Activated CD4-positive, alpha-beta T cell treated with anti-CD3 and anti-CD28 coated beads, Interleukin-2, amount 10 ng/mL, durations not matched to agents 24 days and 14 days (primary cell): ENCODE measurements at regions of chr6 and their contacts with region 1.

Region 1: DNA sequence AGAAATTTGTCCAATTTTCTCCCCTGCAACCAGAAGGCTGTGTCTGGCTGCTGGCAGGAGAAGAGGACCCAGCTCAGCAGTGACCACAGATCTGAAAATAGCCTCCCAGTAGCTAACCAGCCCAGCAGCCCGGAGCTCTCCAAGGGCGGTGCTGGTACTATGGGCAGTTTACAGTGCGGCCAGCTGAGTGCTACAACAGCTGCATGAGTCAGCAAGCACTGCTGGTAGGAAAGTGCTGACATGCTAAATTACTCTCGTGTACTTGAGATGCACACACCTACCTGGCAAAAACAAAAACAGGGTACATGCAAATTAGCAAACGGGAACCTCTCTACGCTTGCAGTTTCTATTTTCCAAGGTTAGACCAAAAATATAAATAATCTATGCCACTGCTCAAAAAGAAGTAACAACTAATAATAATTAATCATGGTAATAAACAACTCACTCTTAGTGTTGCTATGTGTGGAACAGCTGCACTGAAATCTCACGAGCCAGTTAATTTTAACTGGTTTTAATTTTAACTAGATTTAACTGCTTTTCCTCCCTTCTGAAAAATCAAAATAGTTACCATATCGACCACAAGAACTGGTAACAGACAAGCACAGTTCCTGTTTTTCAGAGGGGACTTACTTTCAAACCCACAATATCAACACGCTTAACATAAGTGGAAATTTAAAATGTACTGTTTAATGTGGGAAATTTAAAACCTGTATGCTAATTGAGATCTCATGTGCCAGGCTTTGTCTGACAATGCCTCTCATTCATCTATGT is 10.8 kb downstream of the BACH2 start:
- DNase-seq: peak; percentile 87
- H3K4me3 Mint-ChIP-seq: peak overlapping the region; percentile 87
- H3K27ac Mint-ChIP-seq: peak overlapping the region; percentile 94
- H3K4me1 Mint-ChIP-seq: peaks cover 81% of the 10 kb centered on the region
- H3K27me3 Mint-ChIP-seq: no peaks in the 10 kb centered on the region

Region 2: GRCh38 chr6:90025523-90026061 is 260.2 kb before region 1 on chr6:
- intact Hi-C with region 1: loop called (anchors 1 kb)
- DNase-seq: peak; percentile 72
- H3K4me3 Mint-ChIP-seq: peak overlapping the region; percentile 56
- H3K27ac Mint-ChIP-seq: peak overlapping the region; percentile 90
- H3K4me1 Mint-ChIP-seq: peaks cover 66% of the 10 kb centered on the region
- H3K27me3 Mint-ChIP-seq: no peaks in the 10 kb centered on the region

Region 3: DNA sequence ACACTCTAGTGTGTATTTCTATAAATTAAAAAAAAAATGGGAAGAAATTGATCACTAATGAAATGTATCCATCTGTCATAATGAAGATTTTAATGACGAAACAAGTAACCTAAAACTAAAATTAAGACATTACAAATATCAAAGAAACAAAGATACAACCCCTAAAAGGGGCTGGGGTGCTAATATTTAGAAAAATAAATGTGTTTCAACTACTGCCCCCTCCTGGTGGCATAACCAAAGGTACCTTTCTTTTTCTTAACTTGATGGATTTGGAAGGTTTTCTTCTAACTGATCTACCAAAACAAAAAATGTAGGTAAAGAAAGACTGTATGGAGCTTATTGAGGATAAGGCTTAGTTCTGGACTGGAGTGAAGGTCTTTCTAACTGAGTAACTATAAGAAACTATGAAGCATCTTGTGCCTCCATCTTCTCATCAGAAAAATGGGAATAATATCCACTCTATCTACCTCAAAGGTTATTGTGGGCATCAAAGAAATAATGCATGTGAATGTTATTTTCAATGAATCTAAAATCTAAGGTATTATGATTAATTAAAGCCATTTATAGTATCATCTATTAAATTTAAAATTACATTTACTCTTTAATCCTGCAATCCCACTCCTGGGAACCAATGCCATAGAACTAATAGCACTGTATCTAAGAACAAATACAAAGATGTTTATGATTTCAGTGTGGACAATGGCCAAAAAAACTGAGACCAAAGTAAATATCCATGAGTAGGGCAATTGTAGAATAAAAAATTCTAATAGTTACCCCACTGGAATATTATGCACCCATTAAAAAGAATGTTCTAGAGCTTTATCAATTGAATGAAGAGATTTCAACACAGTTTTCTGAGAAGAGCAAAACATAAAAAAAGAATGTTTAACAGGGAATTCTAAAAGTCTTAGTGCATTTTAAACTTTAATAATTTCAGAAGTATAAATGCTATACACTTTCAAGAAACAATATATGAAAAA is 106.3 kb before region 1 on chr6:
- intact Hi-C with region 1: loop called (anchors 1 kb)
- DNase-seq: peak; percentile 75
- H3K4me3 Mint-ChIP-seq: peak overlapping the region; percentile 11
- H3K27ac Mint-ChIP-seq: no peak overlapping the region
- H3K4me1 Mint-ChIP-seq: peaks cover 68% of the 10 kb centered on the region
- H3K27me3 Mint-ChIP-seq: no peaks in the 10 kb centered on the region

Region 4: DNA sequence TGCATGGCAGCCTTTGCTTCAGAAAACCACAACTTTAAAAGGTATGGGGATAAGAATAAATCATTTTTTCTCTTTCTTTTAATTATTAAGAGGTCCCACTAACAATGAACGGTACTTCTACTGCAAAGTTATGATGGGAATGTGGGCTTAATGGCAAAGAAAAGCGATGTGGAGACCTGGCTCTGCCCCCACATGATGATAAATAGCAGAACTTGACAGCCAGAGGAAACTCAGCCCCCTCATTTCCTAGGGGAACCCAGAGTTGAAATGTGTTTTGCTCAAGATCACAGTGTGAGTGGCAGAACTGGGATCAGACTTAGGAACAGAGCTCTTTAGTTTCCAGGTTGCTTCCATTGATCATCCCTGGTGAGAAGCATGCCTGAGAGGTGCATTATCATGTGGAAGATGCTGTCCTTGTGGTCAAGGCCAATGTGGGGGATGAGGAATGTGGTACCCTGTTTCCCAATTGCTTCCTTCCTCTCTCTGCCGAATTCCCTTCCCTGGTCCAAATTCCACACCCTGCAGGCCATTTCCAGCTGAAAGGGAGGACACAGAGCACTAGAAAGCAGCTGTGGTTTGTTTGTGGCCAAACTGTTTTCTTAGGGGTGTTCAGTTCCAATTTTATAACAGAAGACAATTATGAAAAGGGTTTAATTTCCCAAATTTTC is 55.1 kb before region 1 on chr6:
- intact Hi-C with region 1: loop called (anchors 1 kb)
- DNase-seq: no peak
- H3K4me3 Mint-ChIP-seq: peak overlapping the region; percentile 56
- H3K27ac Mint-ChIP-seq: peak overlapping the region; percentile 30
- H3K4me1 Mint-ChIP-seq: peaks cover 78% of the 10 kb centered on the region
- H3K27me3 Mint-ChIP-seq: no peaks in the 10 kb centered on the region

Region 5: GRCh38 chr6:90296346-90297114 is 10.7 kb after region 1 on chr6 and contains the start of gene BACH2:
- intact Hi-C with region 1: loop called (anchors 1 kb)
- DNase-seq: peak; percentile 97
- H3K4me3 Mint-ChIP-seq: peak within 1 kb of the TSS; percentile 94
- H3K27ac Mint-ChIP-seq: peak within 1 kb of the TSS; percentile 95
- H3K4me1 Mint-ChIP-seq: peaks cover 40% of the 10 kb centered on the region
- H3K27me3 Mint-ChIP-seq: peaks cover 23% of the 10 kb centered on the region
- total RNA-seq, gene BACH2: 69.0 and 69.2 TPM in 2 replicates

Region 6: DNA sequence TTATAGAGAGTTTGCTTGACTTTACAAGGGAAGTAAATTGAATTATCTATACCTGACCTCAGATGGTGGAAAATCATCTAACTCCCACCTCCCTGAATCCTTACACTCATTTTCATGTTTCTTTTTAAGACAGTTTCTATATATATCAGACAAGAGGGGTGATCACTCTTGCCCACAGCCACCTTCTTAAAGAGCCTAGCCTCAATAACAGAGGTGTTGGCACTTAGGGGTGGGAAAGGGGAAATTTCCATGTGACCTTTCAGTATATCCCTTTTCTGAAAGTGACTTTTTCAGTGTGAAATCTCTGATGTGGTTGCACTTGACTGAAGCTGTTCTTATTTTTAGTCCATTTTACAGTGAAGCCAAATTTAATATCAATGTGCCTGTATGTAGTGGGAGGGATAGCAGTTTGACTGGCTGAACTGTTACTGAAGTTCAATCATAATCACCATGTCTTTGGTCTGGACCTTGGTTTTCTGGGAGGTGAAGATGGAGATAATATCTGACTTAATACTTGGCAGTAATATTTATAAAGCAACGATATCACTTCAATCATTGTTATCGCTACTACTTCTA is 159.8 kb after region 1 on chr6:
- intact Hi-C with region 1: loop called (anchors 1 kb)
- DNase-seq: peak; percentile 55
- H3K4me3 Mint-ChIP-seq: peak overlapping the region; percentile 22
- H3K27ac Mint-ChIP-seq: peak overlapping the region; percentile 86
- H3K4me1 Mint-ChIP-seq: peaks cover 41% of the 10 kb centered on the region
- H3K27me3 Mint-ChIP-seq: no peaks in the 10 kb centered on the region

Region 7: DNA sequence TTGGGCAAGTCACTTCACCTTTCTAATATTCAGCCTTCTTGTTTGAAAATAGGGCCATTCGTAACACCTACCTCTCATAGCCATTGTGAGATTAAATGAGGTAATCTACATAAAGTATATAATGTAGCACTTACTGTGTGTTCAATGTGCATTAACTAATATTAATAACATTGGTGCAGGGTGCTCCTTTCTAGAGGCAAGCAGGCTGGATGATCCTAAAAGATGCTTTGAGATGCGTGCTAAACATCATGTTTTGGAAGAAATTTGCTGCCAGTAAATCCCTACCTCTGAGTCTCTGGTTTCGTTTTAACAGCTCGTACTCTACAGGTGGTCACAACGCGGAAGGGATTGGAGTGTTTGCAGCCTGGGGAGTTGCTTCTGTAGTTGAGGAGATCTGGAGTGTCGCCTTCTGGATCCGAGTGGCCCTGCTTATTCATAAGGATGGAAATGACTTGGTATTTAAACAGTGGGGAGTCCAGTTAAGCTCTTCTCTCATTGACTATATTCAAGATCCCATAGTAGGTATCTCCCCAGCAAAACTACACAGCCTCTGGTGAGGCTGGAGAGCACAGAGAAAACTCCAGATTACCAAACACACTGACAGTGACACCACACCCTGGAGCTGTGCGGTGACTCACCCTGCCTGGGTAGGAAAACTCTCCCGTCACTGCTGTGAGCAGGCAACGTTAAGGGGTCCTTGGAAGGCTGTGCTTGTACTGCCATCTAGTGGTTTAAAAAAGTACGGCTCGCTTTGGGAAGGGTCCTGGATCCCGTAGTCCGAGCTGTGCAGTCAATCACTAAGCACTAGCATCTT is 193.2 kb after region 1 on chr6:
- intact Hi-C with region 1: loop called (anchors 1 kb)
- DNase-seq: peak; percentile 95
- H3K4me3 Mint-ChIP-seq: peak overlapping the region; percentile 48
- H3K27ac Mint-ChIP-seq: peak overlapping the region; percentile 71
- H3K4me1 Mint-ChIP-seq: peaks cover 51% of the 10 kb centered on the region
- H3K27me3 Mint-ChIP-seq: no peaks in the 10 kb centered on the region

Region 8: DNA sequence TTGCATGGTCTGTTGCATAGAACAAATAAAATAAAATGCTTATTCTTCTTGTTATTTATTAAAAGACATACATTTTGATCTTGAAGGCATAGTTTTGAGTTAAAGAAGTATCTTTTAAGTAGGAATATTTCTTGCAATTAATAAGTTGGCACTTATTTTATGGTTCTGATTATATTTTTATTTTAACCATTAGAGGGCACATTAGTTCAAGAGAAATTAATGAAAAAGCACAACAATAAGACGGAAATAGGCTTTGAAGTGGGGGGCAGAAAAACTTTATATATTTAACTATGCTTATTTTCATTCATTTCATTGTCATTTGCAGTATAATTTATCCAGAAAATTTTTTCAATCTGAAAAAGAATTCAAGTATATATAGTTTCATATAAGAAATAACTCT is 345.2 kb after region 1 on chr6:
- intact Hi-C with region 1: no loop called
- DNase-seq: no peak
- H3K4me3 Mint-ChIP-seq: no peak overlapping the region
- H3K27ac Mint-ChIP-seq: no peak overlapping the region
- H3K4me1 Mint-ChIP-seq: no peaks in the 10 kb centered on the region
- H3K27me3 Mint-ChIP-seq: peaks cover 17% of the 10 kb centered on the region

Region 9: DNA sequence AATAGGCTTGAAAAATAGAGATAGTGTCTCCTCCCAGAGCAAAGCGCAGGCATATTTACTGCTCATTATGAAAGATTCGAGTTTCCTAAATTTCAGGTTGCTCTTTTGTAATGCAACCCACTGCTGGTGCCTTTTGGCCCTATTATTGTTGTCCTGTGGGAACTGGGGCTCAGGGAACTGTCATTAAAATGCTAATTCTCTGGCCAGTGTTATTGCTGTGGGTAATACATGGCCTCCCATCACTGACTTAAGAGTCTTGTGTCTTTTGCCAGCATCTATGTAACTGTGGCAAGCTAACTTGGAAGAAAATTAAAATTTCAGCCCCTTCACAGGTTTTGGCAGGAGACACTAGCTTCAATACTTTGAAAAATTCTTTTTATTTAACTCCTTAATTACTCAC is 1055.2 kb after region 1 on chr6:
- intact Hi-C with region 1: no loop called
- DNase-seq: no peak
- H3K4me3 Mint-ChIP-seq: no peak overlapping the region
- H3K27ac Mint-ChIP-seq: no peak overlapping the region
- H3K4me1 Mint-ChIP-seq: no peaks in the 10 kb centered on the region
- H3K27me3 Mint-ChIP-seq: no peaks in the 10 kb centered on the region